HEK293 (cell line): ENCODE measurements at regions of chr6 and their contacts with region 1.

Region 1: GRCh38 chr6:33700391-33701050 is 11.0 kb downstream of the UQCC2 start:
- H3K4me3 ChIP-seq: no peak overlapping the region
- H3K27ac ChIP-seq: no peak overlapping the region
- H3K4me1 ChIP-seq: peaks cover 5% of the 10 kb centered on the region; the same call in 1 of the 2 replicates
- CTCF ChIP-seq: peak; percentile 67; the same call in 1 of the 2 replicates

Region 2: GRCh38 chr6:33579828-33580714 is 120.5 kb before region 1 on chr6 and contains the start of gene BAK1:
- CTCF ChIA-PET with region 1: interaction called, 93 read pairs
- POLR2A ChIA-PET with region 1: interaction called, 5 read pairs
- H3K4me3 ChIP-seq: peak within 1 kb of the TSS; percentile 90
- H3K27ac ChIP-seq: peak within 1 kb of the TSS; percentile 71; the same call in 1 of the 2 replicates
- H3K4me1 ChIP-seq: no peaks in the 10 kb centered on the region; the same call in 1 of the 2 replicates
- CTCF ChIP-seq: peak; percentile 89

Region 3: GRCh38 chr6:33592411-33593054 is 108.0 kb before region 1 on chr6:
- CTCF ChIA-PET with region 1: interaction called, 93 read pairs
- POLR2A ChIA-PET with region 1: interaction called, 5 read pairs
- H3K4me3 ChIP-seq: no peak overlapping the region
- H3K27ac ChIP-seq: no peak overlapping the region
- H3K4me1 ChIP-seq: no peaks in the 10 kb centered on the region; the same call in 1 of the 2 replicates
- CTCF ChIP-seq: no peak

Region 4: GRCh38 chr6:33672808-33673207 is 27.7 kb before region 1 on chr6:
- CTCF ChIA-PET with region 1: interaction called, 10 read pairs
- POLR2A ChIA-PET with region 1: no interaction called
- H3K4me3 ChIP-seq: no peak overlapping the region
- H3K27ac ChIP-seq: no peak overlapping the region
- H3K4me1 ChIP-seq: no peaks in the 10 kb centered on the region
- CTCF ChIP-seq: peak; percentile 44

Region 5: GRCh38 chr6:33717934-33718455 is 17.5 kb after region 1 on chr6:
- CTCF ChIA-PET with region 1: interaction called, 10 read pairs
- POLR2A ChIA-PET with region 1: no interaction called
- H3K4me3 ChIP-seq: no peak overlapping the region
- H3K27ac ChIP-seq: no peak overlapping the region
- H3K4me1 ChIP-seq: no peaks in the 10 kb centered on the region
- CTCF ChIP-seq: no peak

Region 6: GRCh38 chr6:33875141-33875581 is 174.6 kb after region 1 on chr6:
- CTCF ChIA-PET with region 1: no interaction called
- POLR2A ChIA-PET with region 1: no interaction called
- H3K4me3 ChIP-seq: no peak overlapping the region
- H3K27ac ChIP-seq: no peak overlapping the region
- H3K4me1 ChIP-seq: no peaks in the 10 kb centered on the region
- CTCF ChIP-seq: no peak

Region 7: GRCh38 chr6:33994472-33995308 is 294.2 kb after region 1 on chr6:
- CTCF ChIA-PET with region 1: no interaction called
- POLR2A ChIA-PET with region 1: no interaction called
- H3K4me3 ChIP-seq: no peak overlapping the region
- H3K27ac ChIP-seq: no peak overlapping the region
- H3K4me1 ChIP-seq: peaks cover 4% of the 10 kb centered on the region; the same call in 1 of the 2 replicates
- CTCF ChIP-seq: no peak